HCT116 (cell line): ENCODE measurements at regions of chr16 and their contacts with region 1.

Region 1: DNA sequence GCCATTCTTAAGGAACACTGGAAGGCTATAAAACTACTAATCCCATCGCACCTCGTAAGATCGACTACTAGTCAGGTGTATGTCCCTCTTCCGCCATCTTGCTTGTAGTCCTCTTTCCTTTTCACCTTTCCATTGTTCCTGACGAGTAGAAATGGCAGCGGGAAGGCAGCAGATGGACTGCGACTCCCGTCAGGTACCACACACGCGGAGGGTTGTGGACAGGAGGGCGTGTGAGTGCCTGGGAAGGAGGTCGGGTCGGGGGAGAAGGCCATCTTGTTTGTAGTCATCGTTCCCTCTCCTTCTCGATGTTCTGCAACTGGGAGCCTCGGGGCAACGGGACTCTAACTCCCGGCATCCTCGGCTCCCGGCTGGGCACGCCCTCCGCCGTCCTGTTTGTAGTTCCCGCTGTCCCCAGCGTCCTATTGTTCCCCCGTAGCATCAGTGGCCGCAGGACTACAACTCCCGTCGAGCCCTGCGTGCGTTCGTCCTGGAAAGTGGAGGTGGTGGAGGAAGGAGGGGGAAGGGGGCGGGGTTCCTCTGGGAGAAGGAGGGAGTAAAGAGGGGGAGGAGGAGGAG is 324 bp upstream of the FBXL19 start:
- DNase-seq: peak; percentile 99
- ATAC-seq: peak; percentile 76
- H3K4me3 ChIP-seq: peak overlapping the region; percentile 62 to 97
- H3K27ac ChIP-seq: peak overlapping the region; percentile 92
- H3K4me1 ChIP-seq: peaks cover 11 to 25% of the 10 kb centered on the region in 2 experiments; a peak in 3 of 4 replicates
- H3K27me3 ChIP-seq: no peaks in the 10 kb centered on the region
- CTCF ChIP-seq: no peak
- POLR2A ChIP-seq: peak; percentile 26
- RAD21 ChIP-seq: no peak

Region 2: GRCh38 chr16:30650369-30651123 is 272.5 kb before region 1 on chr16 and contains the start of gene PRR14:
- CTCF ChIA-PET with region 1: no interaction called
- POLR2A ChIA-PET with region 1: no interaction called
- RAD21 ChIA-PET with region 1: no interaction called
- intact Hi-C with region 1: loop called (anchors 2 kb)
- DNase-seq: peak; percentile 97
- ATAC-seq: peak; percentile 85
- H3K4me3 ChIP-seq: peak within 1 kb of the TSS; percentile 93 to 97
- H3K27ac ChIP-seq: peak within 1 kb of the TSS; percentile 88
- H3K4me1 ChIP-seq: peaks cover 7 to 16% of the 10 kb centered on the region in 2 experiments; a peak in 3 of 4 replicates
- H3K27me3 ChIP-seq: no peaks in the 10 kb centered on the region
- CTCF ChIP-seq: no peak
- POLR2A ChIP-seq: no peak
- RAD21 ChIP-seq: no peak
- total RNA-seq, gene PRR14: 56.2 TPM

Region 3: DNA sequence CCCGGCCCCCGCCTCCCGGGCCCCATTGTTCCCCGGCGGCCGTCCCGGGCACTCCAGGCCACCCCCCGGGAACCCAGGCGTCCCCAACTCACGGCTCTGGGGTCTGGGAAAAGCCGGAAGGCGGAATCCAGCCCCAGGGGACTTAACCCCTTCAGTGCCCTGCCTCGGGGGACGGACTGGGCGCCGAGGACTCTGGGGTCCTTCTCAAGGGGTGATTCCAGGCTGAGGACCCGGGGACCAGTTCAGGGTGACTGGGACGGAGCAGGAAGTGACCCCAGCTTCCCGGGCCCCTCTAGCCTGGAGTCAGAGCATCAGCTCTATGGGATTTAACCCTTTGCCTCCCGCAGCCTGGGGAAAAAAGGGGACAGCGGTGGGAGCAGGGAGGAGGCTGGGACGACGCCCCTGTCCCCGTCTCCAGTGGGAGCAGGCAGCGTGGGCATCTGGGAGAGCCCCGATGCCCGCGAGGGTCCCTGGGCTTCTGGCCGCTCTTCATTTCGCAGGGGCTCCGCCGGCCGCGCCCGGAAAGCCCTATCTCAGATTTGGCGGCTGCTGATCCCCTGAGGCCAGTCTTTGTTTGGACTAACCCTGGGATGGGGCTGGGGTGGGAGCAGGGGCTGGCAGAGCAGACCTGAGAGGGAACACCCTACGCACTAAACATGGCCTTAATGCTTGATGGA is 136.0 kb before region 1 on chr16 and contains the start of gene ZNF629:
- CTCF ChIA-PET with region 1: no interaction called
- POLR2A ChIA-PET with region 1: no interaction called
- RAD21 ChIA-PET with region 1: no interaction called
- intact Hi-C with region 1: loop called (anchors 2 kb)
- DNase-seq: peak; percentile 39
- ATAC-seq: peak; percentile 84
- H3K4me3 ChIP-seq: peak within 1 kb of the TSS; percentile 92 to 94
- H3K27ac ChIP-seq: peak within 1 kb of the TSS; percentile 78
- H3K4me1 ChIP-seq: peaks cover 7 to 22% of the 10 kb centered on the region in 2 experiments; a peak in 3 of 4 replicates
- H3K27me3 ChIP-seq: no peaks in the 10 kb centered on the region
- CTCF ChIP-seq: no peak
- POLR2A ChIP-seq: no peak
- RAD21 ChIP-seq: no peak
- total RNA-seq, gene ZNF629: 18.4 TPM

Region 4: GRCh38 chr16:30844671-30845449 is 78.2 kb before region 1 on chr16:
- CTCF ChIA-PET with region 1: interaction called, 8 read pairs
- POLR2A ChIA-PET with region 1: no interaction called
- RAD21 ChIA-PET with region 1: interaction called, 3 to 4 read pairs
- intact Hi-C with region 1: loop called (anchors 1 kb)
- DNase-seq: peak; percentile 71
- ATAC-seq: peak; percentile 93
- H3K4me3 ChIP-seq: no peak overlapping the region
- H3K27ac ChIP-seq: no peak overlapping the region
- H3K4me1 ChIP-seq: peaks cover 0 to 7% of the 10 kb centered on the region in 2 experiments; a peak in 1 of 4 replicates
- H3K27me3 ChIP-seq: no peaks in the 10 kb centered on the region
- CTCF ChIP-seq: peak; percentile 84 to 93 (median 90)
- POLR2A ChIP-seq: no peak
- RAD21 ChIP-seq: peak; percentile 89

Region 5: GRCh38 chr16:30896889-30897733 is 25.9 kb before region 1 on chr16:
- CTCF ChIA-PET with region 1: interaction called, 5 read pairs
- POLR2A ChIA-PET with region 1: interaction called, 6 read pairs
- RAD21 ChIA-PET with region 1: no interaction called
- intact Hi-C with region 1: loop called (anchors 2 kb)
- DNase-seq: peak; percentile 86
- ATAC-seq: peak; percentile 59
- H3K4me3 ChIP-seq: peak overlapping the region; percentile 60 to 79
- H3K27ac ChIP-seq: peak overlapping the region; percentile 98
- H3K4me1 ChIP-seq: peaks cover 25 to 61% of the 10 kb centered on the region in 2 experiments
- H3K27me3 ChIP-seq: no peaks in the 10 kb centered on the region
- CTCF ChIP-seq: no peak
- POLR2A ChIP-seq: no peak
- RAD21 ChIP-seq: no peak

Region 6: GRCh38 chr16:31785126-31785525 is 862.1 kb after region 1 on chr16:
- CTCF ChIA-PET with region 1: no interaction called
- POLR2A ChIA-PET with region 1: no interaction called
- RAD21 ChIA-PET with region 1: no interaction called
- intact Hi-C with region 1: no loop called
- DNase-seq: no peak
- ATAC-seq: no peak
- H3K4me3 ChIP-seq: no peak overlapping the region
- H3K27ac ChIP-seq: no peak overlapping the region
- H3K4me1 ChIP-seq: no peaks in the 10 kb centered on the region
- H3K27me3 ChIP-seq: no peaks in the 10 kb centered on the region
- CTCF ChIP-seq: no peak
- POLR2A ChIP-seq: no peak
- RAD21 ChIP-seq: no peak